HEK293 (cell line): ENCODE measurements at regions of chr16 and their contacts with region 1.

Region 1: GRCh38 chr16:87636072-87636684 is 33.9 kb downstream of the JPH3 start:
- H3K4me3 ChIP-seq: no peak overlapping the region
- H3K27ac ChIP-seq: no peak overlapping the region
- H3K4me1 ChIP-seq: no peaks in the 10 kb centered on the region; the same call in 1 of the 2 replicates
- CTCF ChIP-seq: peak; percentile 88

Region 2: GRCh38 chr16:87387942-87388817 is 248.0 kb before region 1 on chr16:
- CTCF ChIA-PET with region 1: interaction called, 27 read pairs
- POLR2A ChIA-PET with region 1: interaction called, 3 read pairs
- H3K4me3 ChIP-seq: no peak overlapping the region
- H3K27ac ChIP-seq: peak overlapping the region; percentile 27
- H3K4me1 ChIP-seq: no peaks in the 10 kb centered on the region
- CTCF ChIP-seq: no peak

Region 3: DNA sequence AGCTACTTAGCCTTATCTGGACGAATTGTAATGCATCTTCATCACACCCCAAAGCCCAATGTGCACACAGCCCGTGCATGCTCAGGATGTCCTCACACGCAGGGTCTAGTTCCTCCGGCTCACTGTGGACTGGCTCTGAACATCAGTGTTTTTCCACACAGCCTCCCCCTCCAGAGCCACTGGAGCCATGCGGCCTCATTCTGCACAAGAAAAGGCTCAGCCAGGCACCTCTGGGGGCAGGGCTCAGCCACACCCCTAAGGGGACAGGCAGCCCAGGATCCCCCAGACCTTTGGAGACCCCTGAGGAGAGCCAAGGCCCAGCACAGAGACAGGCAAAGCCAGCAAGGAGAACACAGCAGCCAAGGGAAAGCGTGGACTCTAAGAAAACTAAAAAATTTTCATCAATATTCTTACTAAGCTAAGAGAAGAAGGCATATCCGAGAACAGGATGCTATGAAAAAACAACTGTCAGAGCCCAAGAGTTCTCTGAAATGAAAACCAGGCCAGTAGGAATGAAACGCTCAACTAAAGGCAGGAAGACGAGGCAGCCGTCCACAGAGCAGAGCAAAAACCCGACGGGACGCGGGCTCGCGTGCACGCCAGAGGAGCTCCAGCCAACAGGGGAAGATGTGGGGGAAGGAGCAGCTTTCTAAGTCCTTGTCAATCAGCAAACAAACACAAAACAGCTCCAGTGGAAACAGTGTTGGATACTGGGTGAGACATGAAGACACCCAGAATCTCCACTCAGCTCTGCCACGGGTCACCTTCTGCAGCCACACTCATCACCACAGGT is 209.6 kb before region 1 on chr16:
- CTCF ChIA-PET with region 1: interaction called, 13 read pairs
- POLR2A ChIA-PET with region 1: no interaction called
- H3K4me3 ChIP-seq: no peak overlapping the region
- H3K27ac ChIP-seq: no peak overlapping the region
- H3K4me1 ChIP-seq: no peaks in the 10 kb centered on the region
- CTCF ChIP-seq: no peak

Region 4: DNA sequence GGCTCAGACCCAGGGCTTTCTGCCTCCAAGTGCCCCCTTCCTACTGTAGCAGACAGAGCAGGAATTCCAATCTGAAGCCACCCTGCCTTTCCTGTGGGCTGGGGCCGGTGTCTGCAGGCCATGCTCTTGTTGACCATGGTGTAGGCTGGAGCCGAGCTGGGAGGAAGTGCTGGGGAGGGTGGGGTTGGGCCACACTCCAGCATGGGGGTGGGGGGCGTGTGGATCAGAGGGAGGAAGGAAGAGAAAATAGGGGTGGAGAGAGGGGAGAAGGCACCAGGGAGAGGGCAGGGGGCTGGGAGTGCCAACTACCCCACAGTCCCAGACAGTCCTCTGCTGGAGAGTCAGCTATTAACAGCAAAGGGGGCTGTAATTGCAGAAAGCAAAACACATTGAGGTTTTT is 88.1 kb before region 1 on chr16:
- CTCF ChIA-PET with region 1: interaction called, 11 read pairs
- POLR2A ChIA-PET with region 1: no interaction called
- H3K4me3 ChIP-seq: no peak overlapping the region
- H3K27ac ChIP-seq: no peak overlapping the region
- H3K4me1 ChIP-seq: no peaks in the 10 kb centered on the region
- CTCF ChIP-seq: no peak

Region 5: DNA sequence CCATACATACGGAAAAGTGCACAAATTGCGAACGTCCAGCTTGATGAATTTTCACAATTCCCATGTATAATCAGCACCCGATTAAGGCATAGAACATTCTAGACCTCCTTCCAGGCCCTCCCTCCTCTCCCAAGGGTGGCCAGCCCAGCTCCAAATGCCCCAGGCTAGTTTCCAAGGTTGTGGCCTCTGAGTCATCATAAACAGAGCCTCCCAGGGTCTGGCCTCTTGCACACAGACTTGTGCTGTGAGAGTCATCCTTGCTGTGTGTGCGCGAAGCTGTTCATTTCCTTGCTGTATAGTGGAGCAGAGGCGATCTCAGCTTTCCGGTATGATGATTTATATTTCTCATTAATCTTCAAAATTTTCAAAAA is 54.4 kb before region 1 on chr16:
- CTCF ChIA-PET with region 1: interaction called, 22 read pairs
- POLR2A ChIA-PET with region 1: interaction called, 3 read pairs
- H3K4me3 ChIP-seq: no peak overlapping the region
- H3K27ac ChIP-seq: no peak overlapping the region
- H3K4me1 ChIP-seq: 0 out of 2 replicates have a peak, but pooled peaks cover 3% of the 10 kb centered on the region
- CTCF ChIP-seq: no peak

Region 6: GRCh38 chr16:87647431-87648185 is 11.4 kb after region 1 on chr16:
- CTCF ChIA-PET with region 1: interaction called, 13 read pairs
- POLR2A ChIA-PET with region 1: no interaction called
- H3K4me3 ChIP-seq: no peak overlapping the region
- H3K27ac ChIP-seq: no peak overlapping the region
- H3K4me1 ChIP-seq: no peaks in the 10 kb centered on the region
- CTCF ChIP-seq: no peak

Region 7: GRCh38 chr16:87802670-87803069 is 166.5 kb after region 1 on chr16:
- CTCF ChIA-PET with region 1: no interaction called
- POLR2A ChIA-PET with region 1: no interaction called
- H3K4me3 ChIP-seq: no peak overlapping the region
- H3K27ac ChIP-seq: no peak overlapping the region
- H3K4me1 ChIP-seq: peaks cover 4% of the 10 kb centered on the region; the same call in 1 of the 2 replicates
- CTCF ChIP-seq: no peak

Region 8: GRCh38 chr16:87822108-87822970 is 186.2 kb after region 1 on chr16:
- CTCF ChIA-PET with region 1: no interaction called
- POLR2A ChIA-PET with region 1: no interaction called
- H3K4me3 ChIP-seq: no peak overlapping the region
- H3K27ac ChIP-seq: no peak overlapping the region
- H3K4me1 ChIP-seq: no peaks in the 10 kb centered on the region
- CTCF ChIP-seq: no peak